Transverse colon (tissue), 4 donors: ENCODE measurements at regions of chr3 and their contacts with region 1.

Region 1: GRCh38 chr3:124905849-124906248 is 18.7 kb upstream of the ITGB5 start:
- DNase-seq: no peak
- H3K4me3 ChIP-seq: no peak overlapping the region
- H3K27ac ChIP-seq: no peak overlapping the region
- H3K4me1 ChIP-seq: peaks cover 0 to 4% (median 0%) of the 10 kb centered on the region in 4 donors
- H3K27me3 ChIP-seq: no peaks in the 10 kb centered on the region
- CTCF ChIP-seq: no peak
- EP300 ChIP-seq: no peak
- POLR2A ChIP-seq: no peak

Region 2: GRCh38 chr3:124504332-124505059 is 401.4 kb before region 1 on chr3:
- in situ Hi-C with region 1: no loop called
- intact Hi-C with region 1: no loop called
- DNase-seq: no peak
- H3K4me3 ChIP-seq: no peak overlapping the region
- H3K27ac ChIP-seq: no peak overlapping the region
- H3K4me1 ChIP-seq: no peaks in the 10 kb centered on the region
- H3K27me3 ChIP-seq: no peaks in the 10 kb centered on the region
- CTCF ChIP-seq: no peak
- EP300 ChIP-seq: no peak
- POLR2A ChIP-seq: no peak

Region 3: GRCh38 chr3:124559881-124560574 is 345.8 kb before region 1 on chr3:
- in situ Hi-C with region 1: loop called in 2 of 4 experiments (anchors 25 kb)
- intact Hi-C with region 1: loop called (anchors 10 kb)
- DNase-seq: peak; percentile 75
- H3K4me3 ChIP-seq: no peak overlapping the region
- H3K27ac ChIP-seq: peak overlapping the region; percentile 39 to 49 (median 42)
- H3K4me1 ChIP-seq: peaks cover 4 to 32% (median 18%) of the 10 kb centered on the region in 4 donors
- H3K27me3 ChIP-seq: no peaks in the 10 kb centered on the region
- CTCF ChIP-seq: peak; percentile 76 to 91 (median 81)
- EP300 ChIP-seq: no peak
- POLR2A ChIP-seq: no peak

Region 4: DNA sequence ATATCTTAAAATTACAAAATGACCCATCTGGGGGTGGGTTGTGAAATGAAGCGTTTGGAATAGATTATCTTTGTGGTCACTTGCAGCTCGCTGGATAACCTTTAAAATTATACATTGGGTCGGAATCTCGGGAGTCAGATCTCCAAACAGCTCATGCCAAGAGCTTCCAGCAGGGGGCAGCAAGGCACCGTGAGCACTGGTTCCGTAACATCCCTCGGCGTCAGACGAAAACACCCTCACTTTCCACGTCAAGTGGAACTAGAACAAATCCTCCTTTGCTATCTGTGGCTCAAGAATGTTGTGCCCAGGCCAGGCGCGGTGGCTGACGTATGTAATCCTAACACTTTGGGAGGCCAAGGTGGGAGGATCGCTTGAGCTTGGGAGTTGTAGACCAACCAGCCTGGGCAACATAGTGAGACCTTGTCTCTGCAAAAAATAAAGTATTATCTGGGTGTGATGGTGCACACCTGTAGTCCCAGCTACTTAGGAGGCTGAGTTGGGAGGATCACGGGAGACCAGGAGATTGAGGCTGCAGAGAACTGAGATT is 144.5 kb before region 1 on chr3:
- in situ Hi-C with region 1: loop called (anchors 5 kb)
- intact Hi-C with region 1: loop called (anchors 2 kb)
- DNase-seq: peak; percentile 89
- H3K4me3 ChIP-seq: no peak overlapping the region
- H3K27ac ChIP-seq: peak overlapping the region in 3 of 4 donors; percentile 26 to 50 (median 42)
- H3K4me1 ChIP-seq: peaks cover 0 to 11% (median 8%) of the 10 kb centered on the region in 4 donors
- H3K27me3 ChIP-seq: no peaks in the 10 kb centered on the region
- CTCF ChIP-seq: peak; percentile 91 to 98 (median 94)
- EP300 ChIP-seq: no peak
- POLR2A ChIP-seq: no peak

Region 5: GRCh38 chr3:124860599-124860998 is 45.2 kb before region 1 on chr3:
- in situ Hi-C with region 1: no loop called
- intact Hi-C with region 1: no loop called
- DNase-seq: peak; percentile 58
- H3K4me3 ChIP-seq: no peak overlapping the region
- H3K27ac ChIP-seq: peak overlapping the region; percentile 60 to 79 (median 66)
- H3K4me1 ChIP-seq: peaks cover 0 to 33% (median 8%) of the 10 kb centered on the region in 4 donors
- H3K27me3 ChIP-seq: no peaks in the 10 kb centered on the region
- CTCF ChIP-seq: no peak
- EP300 ChIP-seq: no peak
- POLR2A ChIP-seq: no peak

Region 6: GRCh38 chr3:125011941-125012340 is 106.1 kb after region 1 on chr3:
- in situ Hi-C with region 1: no loop called
- intact Hi-C with region 1: no loop called
- DNase-seq: no peak
- H3K4me3 ChIP-seq: no peak overlapping the region
- H3K27ac ChIP-seq: no peak overlapping the region
- H3K4me1 ChIP-seq: no peaks in the 10 kb centered on the region
- H3K27me3 ChIP-seq: no peaks in the 10 kb centered on the region
- CTCF ChIP-seq: no peak
- EP300 ChIP-seq: no peak
- POLR2A ChIP-seq: no peak